ENCODE measurements at regions of chr1 and their contacts with region 1.

Region 1: GRCh38 chr1:232826318-232826717 is 21.1 kb downstream of the MAP10 start:
- DNase-seq: no peak
- H3K4me3 ChIP-seq: no peak overlapping the region
- H3K27ac ChIP-seq: no peak overlapping the region
- H3K4me1 ChIP-seq: no peaks in the 10 kb centered on the region
- H3K27me3 ChIP-seq: no peaks in the 10 kb centered on the region
- CTCF ChIP-seq: no peak

Region 2: GRCh38 chr1:232813760-232814159 is 12.6 kb before region 1 on chr1:
- CTCF ChIA-PET with region 1: no interaction called
- POLR2A ChIA-PET with region 1: no interaction called
- intact Hi-C with region 1: loop called (anchors 2 kb)
- DNase-seq: no peak
- H3K4me3 ChIP-seq: no peak overlapping the region
- H3K27ac ChIP-seq: no peak overlapping the region
- H3K4me1 ChIP-seq: no peaks in the 10 kb centered on the region; the same call in 1 of the 2 replicates
- H3K27me3 ChIP-seq: no peaks in the 10 kb centered on the region
- CTCF ChIP-seq: no peak